Activated CD8-positive, alpha-beta T cell treated with anti-CD3 and anti-CD28 coated beads for 36 hours (primary cell): ENCODE measurements at regions of chr15 and their contacts with region 1.

Region 1: GRCh38 chr15:85485956-85486567 is 105.7 kb downstream of the AKAP13 start:
- DNase-seq: peak; percentile 74
- ATAC-seq: peak; percentile 94
- H3K4me3 Mint-ChIP-seq: no peak overlapping the region
- H3K27ac Mint-ChIP-seq: peak overlapping the region; percentile 39
- H3K4me1 Mint-ChIP-seq: peaks cover 60% of the 10 kb centered on the region
- H3K27me3 Mint-ChIP-seq: no peaks in the 10 kb centered on the region
- CTCF ChIP-seq: peak; percentile 90

Region 2: GRCh38 chr15:85475317-85475701 is 10.8 kb before region 1 on chr15:
- CTCF ChIA-PET with region 1: interaction called, 21 read pairs
- POLR2A ChIA-PET with region 1: no interaction called
- intact Hi-C with region 1: no loop called
- DNase-seq: no peak
- ATAC-seq: no peak
- H3K4me3 Mint-ChIP-seq: no peak overlapping the region
- H3K27ac Mint-ChIP-seq: no peak overlapping the region
- H3K4me1 Mint-ChIP-seq: peaks cover 83% of the 10 kb centered on the region
- H3K27me3 Mint-ChIP-seq: no peaks in the 10 kb centered on the region
- CTCF ChIP-seq: no peak

Region 3: DNA sequence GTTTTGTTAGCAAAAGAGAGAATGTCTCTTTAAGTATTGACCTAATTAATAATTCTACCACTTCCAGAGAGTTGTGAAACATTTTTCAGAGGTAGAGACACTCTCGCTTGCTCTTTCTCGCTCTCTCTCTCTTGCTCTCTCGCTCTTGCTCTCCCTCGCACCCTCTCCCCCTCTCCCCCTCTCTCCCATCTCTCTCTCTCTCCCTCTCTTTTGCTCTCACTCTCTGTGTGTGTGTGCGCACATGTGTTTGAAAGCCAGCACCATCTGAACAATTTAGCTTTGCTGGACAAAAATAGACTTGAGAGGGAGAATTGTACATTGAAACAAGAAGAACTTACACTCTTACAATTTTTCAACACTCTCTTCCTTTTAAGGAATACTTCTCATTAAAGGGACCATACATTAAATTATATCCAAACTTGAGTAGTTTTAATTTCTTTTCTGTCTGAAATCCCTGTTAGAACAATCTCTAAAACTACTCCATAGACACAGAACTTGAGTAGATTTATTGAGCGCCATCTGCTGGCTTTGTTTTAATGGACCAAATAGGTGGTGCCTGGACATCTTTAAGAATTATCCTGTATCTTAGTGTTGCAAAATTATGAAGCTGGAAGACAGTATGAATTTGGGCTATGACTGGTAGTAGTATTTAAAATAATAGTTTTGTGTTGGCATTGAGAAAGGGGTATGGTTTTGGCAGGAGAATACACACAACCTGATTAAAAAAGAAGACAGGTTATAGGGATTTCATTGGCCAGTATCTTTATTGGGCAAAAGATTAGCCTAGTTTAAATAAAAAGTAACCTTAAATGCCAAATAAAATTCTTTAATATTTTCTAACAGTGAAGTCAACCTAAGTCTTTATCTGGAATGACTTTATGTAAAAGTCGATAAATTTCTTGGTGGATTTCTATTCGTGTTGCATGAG is 19.0 kb after region 1 on chr15:
- CTCF ChIA-PET with region 1: interaction called, 40 read pairs
- POLR2A ChIA-PET with region 1: interaction called, 6 read pairs
- intact Hi-C with region 1: no loop called
- DNase-seq: peak; percentile 68
- ATAC-seq: peak; percentile 67
- H3K4me3 Mint-ChIP-seq: no peak overlapping the region
- H3K27ac Mint-ChIP-seq: no peak overlapping the region
- H3K4me1 Mint-ChIP-seq: peaks cover 53% of the 10 kb centered on the region
- H3K27me3 Mint-ChIP-seq: no peaks in the 10 kb centered on the region
- CTCF ChIP-seq: peak; percentile 68

Region 4: DNA sequence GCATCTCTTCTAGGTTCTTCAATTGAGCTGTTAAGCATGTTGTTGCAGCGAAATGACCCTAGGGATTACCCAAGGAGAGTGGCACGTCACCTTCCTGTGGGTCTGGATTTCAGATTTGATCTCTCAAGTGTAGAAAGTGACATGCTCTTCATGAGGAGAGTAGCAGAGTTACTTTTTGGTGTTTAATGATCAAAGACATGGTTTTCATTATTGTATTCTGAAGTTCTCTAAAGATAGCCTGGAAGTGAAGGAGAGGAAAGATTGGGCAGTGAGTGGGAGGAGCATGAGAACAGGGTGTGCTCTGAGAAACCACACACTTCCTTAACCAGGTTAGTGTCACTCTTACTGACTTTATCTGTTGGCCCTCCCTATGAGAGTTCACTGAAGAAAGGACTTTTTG is 48.0 kb after region 1 on chr15:
- CTCF ChIA-PET with region 1: no interaction called
- POLR2A ChIA-PET with region 1: no interaction called
- intact Hi-C with region 1: no loop called
- DNase-seq: peak; percentile 22
- ATAC-seq: peak; percentile 92
- H3K4me3 Mint-ChIP-seq: peak overlapping the region; percentile 53
- H3K27ac Mint-ChIP-seq: peak overlapping the region; percentile 92
- H3K4me1 Mint-ChIP-seq: peaks cover 44% of the 10 kb centered on the region
- H3K27me3 Mint-ChIP-seq: no peaks in the 10 kb centered on the region
- CTCF ChIP-seq: no peak

Region 5: GRCh38 chr15:85707519-85708338 is 221.7 kb after region 1 on chr15:
- CTCF ChIA-PET with region 1: no interaction called
- POLR2A ChIA-PET with region 1: no interaction called
- intact Hi-C with region 1: loop called (anchors 10 kb)
- DNase-seq: peak; percentile 56
- ATAC-seq: peak; percentile 10
- H3K4me3 Mint-ChIP-seq: peak overlapping the region; percentile 78
- H3K27ac Mint-ChIP-seq: peak overlapping the region; percentile 97
- H3K4me1 Mint-ChIP-seq: peaks cover 81% of the 10 kb centered on the region
- H3K27me3 Mint-ChIP-seq: no peaks in the 10 kb centered on the region
- CTCF ChIP-seq: no peak